RWPE1 (cell line): ENCODE measurements at regions of chr15 and their contacts with region 1.

Region 1: GRCh38 chr15:81091889-81092558 is 42.0 kb upstream of the CFAP161 start:
- DNase-seq: peak; percentile 86
- H3K27ac ChIP-seq: peak overlapping the region; percentile 61
- CTCF ChIP-seq: no peak

Region 2: GRCh38 chr15:80791004-80791403 is 301.0 kb before region 1 on chr15:
- CTCF ChIA-PET with region 1: no interaction called
- POLR2A ChIA-PET with region 1: interaction called, 10 read pairs
- DNase-seq: no peak
- H3K27ac ChIP-seq: no peak overlapping the region
- CTCF ChIP-seq: no peak

Region 3: GRCh38 chr15:80977627-80978036 is 114.4 kb before region 1 on chr15:
- CTCF ChIA-PET with region 1: no interaction called
- POLR2A ChIA-PET with region 1: no interaction called
- DNase-seq: no peak
- H3K27ac ChIP-seq: no peak overlapping the region
- CTCF ChIP-seq: no peak